ENCODE measurements at regions of chr7 and their contacts with region 1.

Region 1: GRCh38 chr7:50369143-50370026 is 64.9 kb downstream of the IKZF1 start:
- DNase-seq: peak; percentile 73
- ATAC-seq: peak; percentile 20
- H3K4me3 Mint-ChIP-seq: peak overlapping the region; percentile 18
- H3K27ac Mint-ChIP-seq: peak overlapping the region; percentile 85
- H3K4me1 Mint-ChIP-seq: peaks cover 94% of the 10 kb centered on the region
- H3K27me3 Mint-ChIP-seq: no peaks in the 10 kb centered on the region

Region 2: DNA sequence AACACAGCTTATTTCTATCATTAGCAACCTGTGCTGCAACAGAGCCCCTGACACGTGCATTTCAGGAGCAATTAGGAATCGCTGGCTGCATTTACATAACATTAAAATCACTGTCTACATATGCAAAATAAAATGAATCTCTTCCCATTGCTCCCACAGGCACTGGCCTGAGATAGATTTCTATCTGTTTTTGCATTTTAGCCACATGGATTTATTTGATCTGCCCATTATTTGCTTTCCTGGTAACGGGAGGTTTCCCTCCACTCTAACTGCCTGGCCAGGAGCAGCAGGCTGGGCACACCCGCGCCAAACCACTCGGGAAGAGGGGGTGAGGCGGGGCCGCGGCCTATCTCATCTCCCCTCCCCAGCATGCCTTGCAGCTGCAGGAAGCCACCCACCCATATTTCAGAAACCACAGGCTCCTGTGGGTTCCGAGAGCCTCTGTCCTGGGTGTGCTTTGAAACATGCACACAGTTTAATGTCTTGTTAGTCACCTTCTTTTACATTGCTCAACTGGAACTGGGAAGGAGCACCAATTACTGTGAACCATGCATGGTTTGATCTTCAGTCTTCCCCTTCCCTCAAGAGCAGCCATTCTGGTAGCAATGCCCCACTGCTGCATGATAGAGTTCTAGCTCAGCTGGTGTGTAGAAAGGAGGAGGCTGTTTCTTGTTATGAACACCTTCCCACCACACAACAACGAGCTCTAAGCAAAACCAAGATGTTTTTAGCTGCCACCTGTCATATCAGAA is 102.6 kb before region 1 on chr7:
- CTCF ChIA-PET with region 1: interaction called, 14 read pairs
- DNase-seq: peak; percentile 93
- ATAC-seq: peak; percentile 59
- H3K4me3 Mint-ChIP-seq: peak overlapping the region; percentile 65
- H3K27ac Mint-ChIP-seq: peak overlapping the region; percentile 98
- H3K4me1 Mint-ChIP-seq: peaks cover 93% of the 10 kb centered on the region
- H3K27me3 Mint-ChIP-seq: no peaks in the 10 kb centered on the region

Region 3: DNA sequence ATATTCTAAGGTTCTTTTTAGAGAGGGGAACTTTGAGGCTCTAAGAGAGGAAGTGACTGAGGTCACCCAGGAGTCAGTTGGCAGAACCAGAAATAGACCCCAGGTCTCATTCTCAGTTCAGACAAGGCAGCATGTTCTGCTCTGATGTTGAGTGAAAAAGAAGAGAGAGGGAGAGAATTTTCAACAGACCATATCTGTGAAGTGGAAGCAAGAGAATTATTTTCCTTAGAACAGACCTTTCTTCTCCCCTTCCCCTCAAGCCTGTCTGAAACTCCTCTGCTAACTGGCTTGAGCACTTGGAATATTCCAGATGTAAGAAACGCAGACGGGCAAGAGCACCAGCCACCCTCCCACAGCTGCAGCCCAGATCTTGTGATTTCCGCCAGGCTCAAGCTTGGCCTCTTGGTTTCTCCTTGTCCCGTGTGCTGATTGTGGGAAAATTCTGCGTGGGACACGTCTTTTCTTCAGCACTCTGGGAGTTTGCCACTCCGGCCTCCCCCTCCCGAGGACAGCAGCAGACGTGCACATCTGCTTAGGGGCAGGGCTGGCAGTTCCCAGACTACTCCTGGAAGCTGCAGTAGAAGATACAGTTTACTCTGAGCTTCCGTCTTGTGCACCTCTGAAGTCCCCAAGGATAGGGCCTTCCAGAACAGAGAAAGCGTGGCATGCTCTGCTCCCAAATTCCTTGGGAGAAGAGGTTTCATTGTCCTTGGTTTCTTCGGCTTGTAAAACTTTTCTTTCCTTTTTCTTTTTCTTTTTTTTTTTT is 87.5 kb before region 1 on chr7:
- CTCF ChIA-PET with region 1: no interaction called
- DNase-seq: no peak
- ATAC-seq: peak; percentile 75
- H3K4me3 Mint-ChIP-seq: peak overlapping the region; percentile 33
- H3K27ac Mint-ChIP-seq: peak overlapping the region; percentile 72
- H3K4me1 Mint-ChIP-seq: peaks cover 45% of the 10 kb centered on the region
- H3K27me3 Mint-ChIP-seq: no peaks in the 10 kb centered on the region

Region 4: GRCh38 chr7:50298811-50299562 is 70.4 kb before region 1 on chr7:
- CTCF ChIA-PET with region 1: no interaction called
- DNase-seq: no peak
- ATAC-seq: no peak
- H3K4me3 Mint-ChIP-seq: no peak overlapping the region
- H3K27ac Mint-ChIP-seq: no peak overlapping the region
- H3K4me1 Mint-ChIP-seq: peaks cover 28% of the 10 kb centered on the region
- H3K27me3 Mint-ChIP-seq: peaks cover 5% of the 10 kb centered on the region

Region 5: DNA sequence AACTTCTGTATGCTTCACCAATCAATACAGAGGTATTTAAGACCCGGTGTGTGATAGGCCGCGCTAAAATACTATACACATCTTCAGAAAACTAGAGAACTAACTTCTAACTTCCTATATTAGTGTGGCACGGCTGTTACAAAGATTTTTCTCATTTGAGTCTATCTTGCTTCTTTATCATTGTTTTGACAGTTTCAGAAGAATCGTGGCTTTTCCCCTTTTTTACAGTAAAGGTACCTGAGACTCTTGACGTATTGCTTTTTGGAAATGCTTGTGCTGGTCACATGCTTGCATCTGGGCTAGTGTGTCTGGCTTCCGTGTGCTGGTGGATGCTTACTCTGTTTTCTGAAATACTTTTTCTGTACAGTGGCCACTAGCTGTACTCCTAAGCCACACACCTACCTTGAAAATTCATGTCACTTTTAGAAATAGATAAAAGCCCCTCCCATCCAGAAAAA is 52.1 kb before region 1 on chr7:
- CTCF ChIA-PET with region 1: interaction called, 103 read pairs
- DNase-seq: peak; percentile 77
- ATAC-seq: peak; percentile 75
- H3K4me3 Mint-ChIP-seq: peak overlapping the region; percentile 91
- H3K27ac Mint-ChIP-seq: peak overlapping the region; percentile 97
- H3K4me1 Mint-ChIP-seq: peaks cover 94% of the 10 kb centered on the region
- H3K27me3 Mint-ChIP-seq: no peaks in the 10 kb centered on the region

Region 6: GRCh38 chr7:50335795-50336754 is 33.3 kb before region 1 on chr7:
- CTCF ChIA-PET with region 1: interaction called, 57 read pairs
- DNase-seq: peak; percentile 92
- ATAC-seq: peak; percentile 45
- H3K4me3 Mint-ChIP-seq: no peak overlapping the region
- H3K27ac Mint-ChIP-seq: no peak overlapping the region
- H3K4me1 Mint-ChIP-seq: peaks cover 30% of the 10 kb centered on the region
- H3K27me3 Mint-ChIP-seq: no peaks in the 10 kb centered on the region

Measured in activated CD8-positive, alpha-beta memory T cell treated with anti-CD3 and anti-CD28 coated beads, Interleukin-2, amount 10 ng/mL, durations not matched to agents 7 days and 5 days (primary cell).